Dendritic cell treated with granulocyte-macrophage colony-stimulating factor and Interleukin-4, amounts not matched to agents 40 ng/mL and 50 ng/mL, for 4 days (primary cell): ENCODE measurements at regions of chrX and their contacts with region 1.

Region 1: DNA sequence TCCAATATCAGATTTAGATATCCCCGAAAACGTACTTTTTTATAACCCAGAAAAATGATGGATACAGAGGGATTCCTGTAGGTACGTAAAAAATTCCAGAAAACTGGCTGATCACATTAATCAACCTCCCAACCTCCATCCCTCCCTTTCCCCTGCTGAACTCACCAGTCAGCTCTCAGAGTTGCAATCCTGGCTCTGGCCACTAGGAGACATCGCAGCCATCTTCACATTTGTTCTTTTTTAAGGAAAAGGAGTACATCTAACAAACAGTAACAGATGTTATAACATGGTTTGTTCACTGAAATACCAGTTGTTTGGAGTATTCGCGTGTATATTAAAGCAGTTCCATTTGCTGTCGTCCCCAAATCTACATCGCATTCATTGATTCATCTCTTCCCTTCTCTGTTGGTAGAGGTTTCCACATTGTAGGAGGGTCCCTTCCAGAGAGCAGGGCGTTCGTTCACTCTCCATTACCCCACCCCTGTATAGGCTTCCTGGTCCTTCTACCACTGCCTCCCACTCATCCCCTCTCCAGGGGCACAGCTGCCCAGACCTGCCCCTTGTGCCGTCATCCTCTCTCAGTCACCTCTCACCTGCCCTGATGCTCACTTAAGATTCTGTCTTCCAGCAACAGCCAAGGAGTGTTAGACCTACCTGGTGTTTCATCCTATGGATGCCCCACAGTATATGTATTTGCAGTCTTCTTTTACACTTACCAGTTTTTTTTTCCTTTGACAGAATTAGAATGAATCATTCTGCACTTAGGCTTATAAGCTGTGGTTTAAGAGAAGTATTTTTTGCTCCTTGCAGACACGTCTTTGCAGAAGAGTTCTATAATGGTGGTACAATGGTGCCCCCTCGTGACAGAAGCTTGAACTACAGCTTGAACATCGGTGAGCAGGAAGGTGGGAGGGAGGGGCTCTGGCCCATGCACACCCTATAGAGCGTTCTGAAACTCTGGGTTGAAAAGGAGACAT is 36.8 kb upstream of the RAB40AL start:
- H3K4me3 Mint-ChIP-seq: no peak overlapping the region
- H3K27ac Mint-ChIP-seq: no peak overlapping the region
- H3K4me1 Mint-ChIP-seq: peaks cover 7% of the 10 kb centered on the region
- H3K27me3 Mint-ChIP-seq: no peaks in the 10 kb centered on the region

Region 2: GRCh38 chrX:102067966-102068708 is 832.1 kb before region 1 on chrX:
- intact Hi-C with region 1: loop called (anchors 5 kb)
- H3K4me3 Mint-ChIP-seq: no peak overlapping the region
- H3K27ac Mint-ChIP-seq: no peak overlapping the region
- H3K4me1 Mint-ChIP-seq: no peaks in the 10 kb centered on the region
- H3K27me3 Mint-ChIP-seq: no peaks in the 10 kb centered on the region

Region 3: GRCh38 chrX:102950908-102951866 is 51.0 kb after region 1 on chrX:
- intact Hi-C with region 1: no loop called
- H3K4me3 Mint-ChIP-seq: peak overlapping the region; percentile 72
- H3K27ac Mint-ChIP-seq: no peak overlapping the region
- H3K4me1 Mint-ChIP-seq: peaks cover 8% of the 10 kb centered on the region
- H3K27me3 Mint-ChIP-seq: no peaks in the 10 kb centered on the region